Vagina (tissue), 2 donors: ENCODE measurements at regions of chr21 and their contacts with region 1.

Region 1: GRCh38 chr21:34073032-34073869 is at the starts of genes MRPS6 and SLC5A3:
- DNase-seq: no peak
- H3K4me3 ChIP-seq: peak within 1 kb of the TSS; percentile 69 to 89
- H3K27ac ChIP-seq: peak within 1 kb of the TSS; percentile 97
- H3K4me1 ChIP-seq: peaks cover 37% of the 10 kb centered on the region
- H3K27me3 ChIP-seq: no peaks in the 10 kb centered on the region
- CTCF ChIP-seq: peak in 1 of 3 experiments; percentile 7
- POLR2A ChIP-seq: peak in 1 of 2 donors; percentile 92
- total RNA-seq, gene MRPS6: 23.3 TPM
- total RNA-seq, gene SLC5A3: 17.9 TPM

Region 2: DNA sequence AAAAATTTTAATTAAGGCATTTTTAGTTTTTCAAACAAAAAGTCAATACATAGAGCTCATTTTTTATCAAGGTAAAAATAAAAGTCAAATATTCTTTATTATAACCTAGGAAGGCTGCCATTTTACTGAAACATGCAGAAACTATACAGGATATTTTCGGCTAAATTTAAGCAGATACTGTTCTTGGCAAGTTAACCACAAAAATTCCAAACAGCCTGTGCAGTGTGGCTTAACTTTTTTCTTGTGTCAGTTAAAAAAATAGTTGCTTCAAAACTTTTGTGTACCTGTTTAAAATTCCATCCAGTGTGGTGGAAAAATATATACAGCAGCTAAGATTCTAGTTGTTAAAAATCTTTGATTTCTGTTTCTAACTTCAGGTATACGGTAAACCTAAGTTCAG is 292.6 kb before region 1 on chr21:
- intact Hi-C with region 1: no loop called
- DNase-seq: no peak
- H3K4me3 ChIP-seq: no peak overlapping the region
- H3K27ac ChIP-seq: no peak overlapping the region
- H3K4me1 ChIP-seq: no peaks in the 10 kb centered on the region
- H3K27me3 ChIP-seq: no peaks in the 10 kb centered on the region
- CTCF ChIP-seq: no peak
- POLR2A ChIP-seq: no peak

Region 3: DNA sequence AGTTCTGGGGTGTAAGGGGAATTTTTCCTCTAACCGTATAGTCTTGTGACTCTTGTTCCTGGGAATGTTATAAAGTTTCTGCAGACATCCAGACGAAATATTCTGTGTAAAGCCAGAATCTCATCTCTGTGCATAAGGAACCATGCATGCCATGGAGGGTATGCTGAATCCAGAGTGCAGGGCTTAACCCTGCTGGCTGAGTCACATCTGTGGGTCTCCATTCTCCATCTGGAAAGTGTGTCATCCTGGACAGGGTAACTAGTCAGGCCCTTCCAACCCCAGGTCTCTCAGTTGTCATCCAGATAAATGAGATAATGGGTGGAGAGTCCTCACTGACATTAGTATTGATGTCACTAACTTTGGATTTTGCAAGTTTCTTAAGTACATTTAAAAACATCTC is 206.4 kb before region 1 on chr21:
- intact Hi-C with region 1: no loop called
- DNase-seq: no peak
- H3K4me3 ChIP-seq: no peak overlapping the region
- H3K27ac ChIP-seq: no peak overlapping the region
- H3K4me1 ChIP-seq: no peaks in the 10 kb centered on the region
- H3K27me3 ChIP-seq: no peaks in the 10 kb centered on the region
- CTCF ChIP-seq: no peak
- POLR2A ChIP-seq: no peak

Region 4: DNA sequence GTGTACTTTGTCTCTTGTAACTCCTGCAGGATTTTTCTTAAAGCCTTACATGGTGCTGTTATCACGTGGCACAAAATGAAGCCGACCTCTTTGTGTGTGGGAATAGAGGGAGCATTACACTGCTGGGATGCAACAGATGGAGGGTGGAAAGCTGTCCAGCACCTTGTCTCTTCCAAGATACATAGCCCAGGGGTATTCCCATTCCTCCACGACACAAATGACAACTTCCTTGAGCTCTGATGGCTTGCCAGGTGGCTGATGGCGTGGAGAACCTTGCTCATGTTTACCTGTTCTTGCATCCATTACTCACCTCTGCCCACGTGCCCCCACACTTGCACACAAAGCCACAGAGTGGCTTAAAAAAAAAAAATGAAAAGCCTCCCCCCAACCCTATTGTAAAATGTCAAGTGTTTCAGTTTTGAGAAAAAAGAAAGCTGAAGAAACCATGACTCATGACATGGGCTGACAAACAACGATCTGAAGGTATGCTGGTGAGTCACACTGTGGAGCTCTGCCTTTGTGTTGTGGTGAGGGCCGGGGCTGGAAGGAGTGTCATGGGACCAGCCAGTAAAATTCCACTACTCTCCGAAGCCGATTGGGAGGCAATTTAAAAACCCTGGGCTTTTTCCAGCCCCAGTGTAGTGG is 125.7 kb before region 1 on chr21:
- intact Hi-C with region 1: loop called (anchors 10 kb)
- DNase-seq: peak; percentile 96 to 98
- H3K4me3 ChIP-seq: peak overlapping the region; percentile 15 to 17
- H3K27ac ChIP-seq: peak overlapping the region; percentile 96
- H3K4me1 ChIP-seq: peaks cover 28% of the 10 kb centered on the region
- H3K27me3 ChIP-seq: no peaks in the 10 kb centered on the region
- CTCF ChIP-seq: no peak
- POLR2A ChIP-seq: no peak